SK-N-SH (cell line): ENCODE measurements at regions of chr12 and their contacts with region 1.

Region 1: DNA sequence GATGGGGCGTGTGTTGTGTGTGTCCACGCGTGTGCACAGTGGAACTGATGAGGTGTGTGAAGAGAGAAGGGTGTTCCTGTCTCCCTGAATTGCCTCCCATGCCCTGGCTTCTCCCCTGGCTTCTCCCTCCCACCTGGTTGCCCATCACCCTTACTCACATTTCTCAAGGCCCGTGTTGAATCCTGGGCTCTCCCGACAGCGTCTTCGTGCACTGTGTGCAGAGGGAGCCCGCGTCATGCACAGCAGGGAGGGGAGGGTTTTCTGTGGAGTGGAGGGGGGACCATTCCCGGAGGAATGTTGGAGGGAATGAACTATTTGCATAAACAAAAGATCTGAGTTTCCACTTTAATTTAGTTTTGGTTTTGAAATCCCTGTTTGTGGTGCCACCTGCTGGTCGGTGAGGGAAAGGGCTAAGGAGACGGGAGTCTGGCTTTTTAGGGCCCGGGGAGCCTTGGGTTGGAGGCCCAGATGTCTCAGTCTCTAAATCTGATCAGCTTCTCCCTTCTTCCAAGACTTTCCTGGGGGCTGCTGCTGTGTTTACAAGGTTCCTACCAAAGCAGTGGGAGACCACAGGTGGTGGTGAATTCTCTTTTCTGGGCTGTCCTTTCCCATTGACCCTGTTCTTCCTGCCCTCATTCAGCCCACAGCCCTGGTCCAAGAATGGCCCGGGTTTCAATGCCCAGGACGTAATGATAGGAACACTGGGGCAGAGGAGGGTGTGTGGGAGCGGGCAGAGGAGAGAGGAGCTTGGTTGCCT is at the start of gene C1R:
- DNase-seq: peak; percentile 77
- H3K4me3 ChIP-seq: peak within 1 kb of the TSS; percentile 25 to 54; a peak in 3 of 4 replicates
- H3K27ac ChIP-seq: no peak within 1 kb of the TSS
- H3K4me1 ChIP-seq: peaks cover 0 to 8% of the 10 kb centered on the region in 2 experiments; a peak in 1 of 4 replicates
- H3K27me3 ChIP-seq: no peaks in the 10 kb centered on the region
- CTCF ChIP-seq: peak; percentile 81
- EP300 ChIP-seq: no peak
- RAD21 ChIP-seq: peak; percentile 72
- polyA plus RNA-seq, gene C1R: 18.7 and 20.1 TPM in 2 replicates

Region 2: DNA sequence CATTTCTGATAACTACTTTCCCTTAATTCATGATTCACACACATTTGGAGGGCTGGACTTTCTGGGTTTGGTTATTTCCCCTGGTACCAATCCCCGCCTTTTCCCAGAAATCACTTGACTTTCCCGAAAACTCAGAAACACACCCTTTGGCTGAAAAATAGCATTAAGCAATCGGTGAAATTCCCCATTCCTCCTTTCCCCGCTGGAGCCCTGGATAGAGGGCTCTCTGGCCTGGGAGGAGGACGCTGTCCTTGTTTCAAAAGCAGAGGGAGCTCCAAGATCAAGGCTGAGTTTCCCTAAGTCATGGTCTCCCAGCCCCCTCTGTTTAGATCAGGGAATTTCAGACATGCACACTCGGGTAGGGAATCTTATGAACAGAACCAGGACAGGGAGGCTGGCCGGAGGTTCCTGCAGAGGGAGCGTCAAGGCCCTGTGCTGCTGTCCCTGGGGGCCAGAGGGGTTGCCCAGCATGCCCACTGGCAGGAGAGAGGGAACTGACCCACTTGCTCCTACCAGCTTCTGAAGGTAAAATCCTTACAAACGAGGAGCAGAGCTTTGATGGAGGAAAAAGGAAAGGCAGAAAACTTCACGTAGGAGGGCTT is 32.0 kb before region 1 on chr12 and contains the start of gene C1S:
- CTCF ChIA-PET with region 1: interaction called, 11 read pairs
- POLR2A ChIA-PET with region 1: no interaction called
- DNase-seq: peak; percentile 53
- H3K4me3 ChIP-seq: no peak within 1 kb of the TSS
- H3K27ac ChIP-seq: no peak within 1 kb of the TSS
- H3K4me1 ChIP-seq: no peaks in the 10 kb centered on the region
- H3K27me3 ChIP-seq: peaks cover 20% of the 10 kb centered on the region; the same call in 1 of the 2 replicates
- CTCF ChIP-seq: peak; percentile 70
- EP300 ChIP-seq: no peak
- RAD21 ChIP-seq: peak; percentile 72
- polyA plus RNA-seq, gene C1S: 14.5 and 19.3 TPM in 2 replicates

Region 3: DNA sequence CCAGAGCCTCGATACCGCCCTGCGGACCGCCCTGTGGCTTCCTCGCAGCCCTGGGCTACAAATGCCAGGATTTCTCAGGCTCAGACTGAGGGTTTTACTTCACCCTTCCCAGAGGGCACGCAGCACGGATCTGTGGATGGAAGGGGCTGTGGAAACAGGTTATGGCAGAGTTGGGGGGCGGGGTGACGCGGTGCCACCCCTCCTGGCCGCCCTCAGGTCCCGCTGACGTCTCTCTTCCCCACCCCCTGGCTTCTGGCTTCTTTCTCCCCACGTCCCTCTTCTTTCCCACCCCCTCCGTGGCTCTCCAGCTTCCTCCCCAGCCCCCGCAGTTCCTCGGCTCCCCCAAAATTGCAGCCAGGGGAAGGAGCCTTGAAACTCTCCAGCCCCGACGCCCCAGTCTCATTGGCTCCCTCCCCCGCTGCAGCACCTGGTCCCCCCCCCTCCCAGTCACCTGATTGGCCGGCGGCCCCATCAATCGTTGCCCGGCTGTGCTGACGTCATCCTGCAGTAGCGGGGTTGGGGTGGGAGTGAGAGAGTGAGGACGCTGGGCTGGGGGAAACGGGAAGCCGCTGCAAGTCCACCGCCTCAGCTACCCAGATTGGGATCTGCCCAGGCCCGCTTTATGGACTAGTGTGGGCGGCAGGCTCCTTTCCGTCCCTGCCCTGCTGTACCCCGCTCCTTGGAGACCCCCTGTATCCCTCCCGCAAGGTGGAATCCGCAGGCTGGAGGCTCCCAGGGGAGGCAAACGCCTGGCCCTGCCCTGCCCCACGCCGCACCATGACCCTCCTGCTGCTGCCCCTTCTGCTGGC is 37.7 kb after region 1 on chr12 and contains the start of gene CLSTN3:
- CTCF ChIA-PET with region 1: no interaction called
- POLR2A ChIA-PET with region 1: no interaction called
- DNase-seq: peak; percentile 100
- H3K4me3 ChIP-seq: peak within 1 kb of the TSS; percentile 71 to 76
- H3K27ac ChIP-seq: peak within 1 kb of the TSS in 1 of 2 experiments; percentile 67; a peak in 1 of 4 replicates
- H3K4me1 ChIP-seq: peaks cover 0 to 13% of the 10 kb centered on the region in 2 experiments; a peak in 1 of 4 replicates
- H3K27me3 ChIP-seq: 0 out of 2 replicates have a peak, but pooled peaks cover 7% of the 10 kb centered on the region
- CTCF ChIP-seq: no peak
- EP300 ChIP-seq: no peak
- RAD21 ChIP-seq: no peak
- polyA plus RNA-seq, gene CLSTN3: 12.7 and 12.9 TPM in 2 replicates

Region 4: GRCh38 chr12:7207866-7208625 is 115.6 kb after region 1 on chr12:
- CTCF ChIA-PET with region 1: no interaction called
- POLR2A ChIA-PET with region 1: no interaction called
- DNase-seq: no peak
- H3K4me3 ChIP-seq: no peak overlapping the region
- H3K27ac ChIP-seq: no peak overlapping the region
- H3K4me1 ChIP-seq: no peaks in the 10 kb centered on the region
- H3K27me3 ChIP-seq: no peaks in the 10 kb centered on the region
- CTCF ChIP-seq: no peak
- EP300 ChIP-seq: no peak
- RAD21 ChIP-seq: no peak